ENCODE measurements at regions of chr4 and their contacts with region 1.

Region 1: DNA sequence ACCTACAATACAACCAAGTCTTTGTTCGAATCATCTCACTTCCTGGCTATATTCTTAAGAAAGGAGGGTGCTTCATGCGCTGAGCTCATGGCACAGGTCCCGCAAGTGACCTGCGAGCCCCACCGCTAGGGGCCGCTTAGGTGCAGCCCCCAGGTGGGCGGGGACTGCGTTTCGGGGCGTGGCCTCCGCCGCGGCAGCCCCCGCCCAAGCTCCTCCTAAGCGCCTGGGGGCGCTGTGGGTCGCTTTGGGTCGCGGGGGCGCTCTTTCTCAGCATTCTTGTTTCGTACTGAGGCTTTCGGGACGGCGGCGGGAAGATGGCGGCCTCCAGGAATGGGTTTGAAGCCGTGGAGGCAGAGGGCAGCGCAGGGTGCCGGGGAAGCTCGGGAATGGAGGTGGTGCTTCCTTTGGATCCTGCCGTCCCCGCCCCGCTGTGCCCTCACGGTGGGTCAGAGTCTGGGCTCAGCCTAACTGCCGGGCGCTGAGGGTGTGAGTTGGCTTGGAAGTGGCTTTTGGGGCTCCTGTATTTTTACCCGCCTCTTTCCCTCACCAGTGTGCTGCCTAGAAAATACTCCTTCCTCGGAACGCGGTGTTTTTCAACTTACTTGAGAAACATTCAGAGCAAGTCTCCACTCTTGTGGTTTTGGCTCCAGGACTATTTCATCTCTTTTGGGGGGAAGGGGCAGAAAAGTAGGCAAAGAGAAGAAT is at the start of gene ZCCHC4:
- DNase-seq: peak; percentile 91
- CTCF ChIP-seq: peak; percentile 95

Region 2: DNA sequence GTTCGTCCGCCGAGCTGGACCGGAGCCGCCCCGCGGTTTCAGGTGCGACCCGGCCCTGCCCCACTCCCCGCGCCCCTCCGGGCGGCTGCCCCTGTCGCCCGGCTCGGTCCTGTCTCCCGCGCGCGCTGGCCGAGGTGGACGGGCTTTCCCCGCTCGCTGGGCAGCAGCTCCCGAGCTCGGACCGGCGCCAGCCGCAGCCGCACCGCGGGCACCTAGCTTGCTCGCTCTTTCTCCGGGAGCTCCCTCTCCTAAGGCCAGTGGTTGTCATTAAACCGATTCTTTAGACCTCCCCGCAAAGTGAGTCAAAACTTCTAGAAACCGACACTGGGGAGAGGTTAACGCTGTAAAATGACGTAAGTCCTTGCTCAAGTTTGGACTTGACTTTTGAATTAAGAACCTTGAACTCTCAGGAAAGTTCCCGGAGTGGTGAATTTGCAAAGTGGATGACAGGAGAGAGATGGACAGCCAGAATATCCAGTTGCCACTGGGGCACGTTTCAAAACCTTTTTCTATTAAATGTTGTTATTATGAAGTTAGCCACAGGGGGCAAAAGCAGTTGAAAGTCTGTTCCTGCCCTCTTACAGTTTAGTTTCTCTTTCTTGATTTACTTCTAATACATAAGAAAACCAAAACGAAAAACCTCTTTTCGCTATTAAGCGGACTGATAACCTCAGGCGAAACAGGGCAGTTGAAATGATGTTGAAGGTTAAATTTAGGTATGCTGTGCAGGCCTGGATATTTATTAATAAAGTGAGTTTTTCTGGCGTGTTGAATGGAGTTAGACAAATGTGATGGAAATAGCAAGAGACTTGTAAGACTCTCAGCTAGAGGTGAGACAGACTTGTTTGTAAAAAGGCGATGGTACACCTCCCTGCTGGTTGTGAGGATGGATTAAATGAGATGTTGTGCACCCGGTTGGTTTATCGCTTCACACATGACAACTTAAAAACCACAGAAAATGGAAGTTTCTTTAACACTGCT is 78.0 kb before region 1 on chr4:
- CTCF ChIA-PET with region 1: interaction called, 59 read pairs
- POLR2A ChIA-PET with region 1: interaction called, 3 read pairs
- DNase-seq: peak; percentile 69
- CTCF ChIP-seq: peak; percentile 46

Region 3: GRCh38 chr4:25271866-25272265 is 40.8 kb before region 1 on chr4:
- CTCF ChIA-PET with region 1: interaction called, 12 read pairs
- POLR2A ChIA-PET with region 1: no interaction called
- DNase-seq: no peak
- CTCF ChIP-seq: no peak

Region 4: DNA sequence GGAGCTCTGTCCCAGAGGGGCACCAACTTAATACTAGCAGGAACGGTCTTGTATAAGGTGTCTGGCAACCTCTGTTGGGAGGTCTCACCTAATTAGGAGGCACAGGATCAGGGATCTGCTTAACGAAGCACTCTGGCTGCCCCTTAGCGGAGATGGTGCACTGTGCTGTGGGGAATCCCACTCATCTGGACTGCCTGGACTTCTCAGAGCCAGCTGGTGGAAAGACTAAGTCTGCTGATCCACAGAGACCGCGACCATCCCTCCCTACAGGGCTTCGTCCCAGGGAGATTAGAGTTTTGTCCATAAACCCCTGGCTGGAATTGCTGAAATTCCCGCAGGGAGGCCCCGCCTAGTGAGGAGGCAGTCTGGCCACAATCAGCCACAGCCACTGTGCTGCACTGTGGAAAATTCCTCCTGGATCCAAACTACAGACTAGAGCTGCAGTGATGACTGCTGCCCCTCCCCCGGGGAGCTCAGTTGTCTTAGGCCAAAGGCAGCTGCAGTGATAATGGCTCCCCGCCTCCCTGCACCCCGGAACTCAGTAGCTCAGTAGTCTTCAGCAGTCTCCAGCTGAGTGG is 22.1 kb before region 1 on chr4:
- CTCF ChIA-PET with region 1: interaction called, 31 read pairs
- POLR2A ChIA-PET with region 1: no interaction called
- DNase-seq: no peak
- CTCF ChIP-seq: no peak

Region 5: DNA sequence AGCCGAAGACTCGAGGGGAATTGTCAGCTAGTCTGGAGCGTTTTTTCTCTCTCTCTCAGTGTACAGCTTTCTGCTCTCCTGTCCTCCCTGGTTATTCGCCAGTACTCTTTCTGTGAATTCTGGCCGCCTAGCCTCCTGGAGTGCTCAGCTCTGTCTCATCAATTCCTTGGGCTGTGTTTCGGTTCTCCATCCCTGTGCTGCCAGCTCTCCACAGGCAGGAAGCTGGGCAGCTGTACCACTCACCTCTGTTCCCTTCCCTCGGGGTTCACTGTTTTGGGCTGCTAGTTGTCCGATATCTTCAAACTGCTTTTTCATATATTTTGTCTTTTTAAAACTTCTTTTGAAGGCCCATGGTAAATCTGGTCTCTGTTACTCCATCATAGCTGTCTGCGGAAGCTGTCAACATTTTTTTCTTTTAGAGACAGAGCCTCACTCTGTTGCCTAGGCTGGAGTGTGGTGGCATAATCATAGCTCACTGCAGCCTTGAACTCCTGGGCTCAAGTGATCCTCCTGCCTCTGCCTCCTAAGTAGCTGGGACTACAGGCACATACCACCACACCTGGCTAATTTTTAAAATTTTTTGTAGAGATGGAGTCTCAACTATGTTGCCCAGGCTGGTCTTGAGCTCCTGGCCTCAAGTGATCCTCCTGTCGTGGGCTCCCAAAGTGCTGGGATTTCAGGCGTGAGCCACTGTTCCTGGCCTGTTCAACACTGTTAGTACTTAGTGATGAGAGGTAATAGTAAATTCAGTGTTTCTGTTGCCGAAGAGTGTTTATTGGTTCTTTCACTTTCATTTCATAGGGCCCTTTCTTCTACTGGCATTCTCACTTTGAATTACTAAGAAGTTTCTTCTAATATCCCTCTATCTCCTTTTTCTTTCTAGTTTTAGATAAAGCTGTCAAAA is 18.5 kb after region 1 on chr4:
- CTCF ChIA-PET with region 1: interaction called, 64 read pairs
- POLR2A ChIA-PET with region 1: no interaction called
- DNase-seq: peak; percentile 35
- CTCF ChIP-seq: no peak

Region 6: GRCh38 chr4:25358515-25359275 is 46.0 kb after region 1 on chr4:
- CTCF ChIA-PET with region 1: interaction called, 29 read pairs
- POLR2A ChIA-PET with region 1: no interaction called
- DNase-seq: no peak
- CTCF ChIP-seq: no peak

Region 7: GRCh38 chr4:25376754-25377571 is 64.3 kb after region 1 on chr4 and contains the start of gene ANAPC4:
- CTCF ChIA-PET with region 1: interaction called, 17 read pairs
- POLR2A ChIA-PET with region 1: no interaction called
- DNase-seq: peak; percentile 100
- CTCF ChIP-seq: no peak